ENCODE measurements at regions of chr2 and their contacts with region 1.

Region 1: GRCh38 chr2:202831242-202832220 is 40.0 kb downstream of the ICA1L start:
- DNase-seq: peak; percentile 65 to 78
- H3K4me3 ChIP-seq: no peak overlapping the region
- H3K4me3 Mint-ChIP-seq: peak overlapping the region; percentile 14
- H3K27ac Mint-ChIP-seq: no peak overlapping the region
- H3K4me1 ChIP-seq: 0 out of 2 replicates have a peak, but pooled peaks cover 6% of the 10 kb centered on the region
- H3K4me1 Mint-ChIP-seq: peaks cover 9% of the 10 kb centered on the region
- H3K27me3 ChIP-seq: no peaks in the 10 kb centered on the region
- H3K27me3 Mint-ChIP-seq: no peaks in the 10 kb centered on the region
- CTCF ChIP-seq: peak; percentile 65 to 82

Region 2: DNA sequence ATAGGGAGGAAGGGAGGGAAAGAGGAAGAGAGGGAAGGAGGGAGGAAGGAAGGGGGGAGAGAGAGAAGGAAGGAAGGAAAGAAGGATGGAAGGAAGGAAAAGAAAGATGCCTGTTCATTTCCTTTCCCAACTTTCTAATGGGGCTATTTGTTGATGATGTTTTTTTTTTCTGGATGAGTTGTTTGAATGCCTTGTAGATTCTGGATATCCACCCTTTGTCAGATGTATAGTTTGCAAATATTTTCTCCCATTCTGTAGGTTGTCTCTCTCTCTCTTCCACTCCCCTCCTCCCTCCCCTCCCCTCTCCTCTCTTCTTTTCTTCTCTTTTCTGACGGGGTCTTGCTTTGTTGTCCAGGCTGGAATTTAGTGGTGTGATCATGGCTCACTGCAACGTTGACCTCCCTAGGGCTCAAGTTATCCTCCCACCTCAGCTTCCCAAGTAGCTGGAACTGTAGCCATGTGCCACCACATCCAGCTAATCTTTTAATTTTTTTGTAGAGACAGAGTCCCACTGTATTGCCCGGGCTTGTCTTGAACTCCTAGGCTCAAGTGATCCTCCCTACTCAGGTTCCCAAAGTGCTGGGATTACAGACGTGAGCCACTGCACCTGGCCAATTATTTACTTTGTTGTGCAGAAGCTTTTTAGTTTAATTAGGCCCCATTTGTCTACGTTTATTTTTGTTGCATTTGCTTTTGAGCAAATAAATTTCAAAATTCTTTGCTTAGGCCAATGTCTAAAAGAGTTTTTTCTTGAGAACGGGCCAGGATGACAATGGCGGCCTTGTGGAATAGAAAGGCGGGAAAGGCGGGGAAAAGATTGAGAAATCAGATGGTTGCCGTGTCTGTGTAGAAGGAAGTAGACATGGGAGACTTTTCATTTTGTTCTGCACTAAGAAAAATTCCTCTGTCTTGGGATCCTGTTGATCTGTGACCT is 254.0 kb before region 1 on chr2:
- CTCF ChIA-PET with region 1: no interaction called
- POLR2A ChIA-PET with region 1: no interaction called
- intact Hi-C with region 1: loop called (anchors 2 kb)
- DNase-seq: no peak
- H3K4me3 ChIP-seq: no peak overlapping the region
- H3K4me3 Mint-ChIP-seq: no peak overlapping the region
- H3K27ac Mint-ChIP-seq: no peak overlapping the region
- H3K4me1 ChIP-seq: no peaks in the 10 kb centered on the region
- H3K4me1 Mint-ChIP-seq: no peaks in the 10 kb centered on the region
- H3K27me3 ChIP-seq: no peaks in the 10 kb centered on the region
- H3K27me3 Mint-ChIP-seq: no peaks in the 10 kb centered on the region
- CTCF ChIP-seq: no peak

Region 3: GRCh38 chr2:202634556-202635427 is 196.7 kb before region 1 on chr2 and contains the start of gene FAM117B:
- CTCF ChIA-PET with region 1: no interaction called
- POLR2A ChIA-PET with region 1: no interaction called
- intact Hi-C with region 1: no loop called
- DNase-seq: peak; percentile 98
- H3K4me3 ChIP-seq: peak within 1 kb of the TSS; percentile 97
- H3K4me3 Mint-ChIP-seq: peak within 1 kb of the TSS; percentile 89
- H3K27ac Mint-ChIP-seq: peak within 1 kb of the TSS; percentile 80
- H3K4me1 ChIP-seq: peaks cover 9% of the 10 kb centered on the region; the same call in 1 of the 2 replicates
- H3K4me1 Mint-ChIP-seq: peaks cover 15% of the 10 kb centered on the region
- H3K27me3 ChIP-seq: no peaks in the 10 kb centered on the region
- H3K27me3 Mint-ChIP-seq: no peaks in the 10 kb centered on the region
- CTCF ChIP-seq: peak in 1 of 2 experiments; percentile 34
- total RNA-seq, gene FAM117B: 9.6 and 9.8 TPM in 2 replicates

Region 4: DNA sequence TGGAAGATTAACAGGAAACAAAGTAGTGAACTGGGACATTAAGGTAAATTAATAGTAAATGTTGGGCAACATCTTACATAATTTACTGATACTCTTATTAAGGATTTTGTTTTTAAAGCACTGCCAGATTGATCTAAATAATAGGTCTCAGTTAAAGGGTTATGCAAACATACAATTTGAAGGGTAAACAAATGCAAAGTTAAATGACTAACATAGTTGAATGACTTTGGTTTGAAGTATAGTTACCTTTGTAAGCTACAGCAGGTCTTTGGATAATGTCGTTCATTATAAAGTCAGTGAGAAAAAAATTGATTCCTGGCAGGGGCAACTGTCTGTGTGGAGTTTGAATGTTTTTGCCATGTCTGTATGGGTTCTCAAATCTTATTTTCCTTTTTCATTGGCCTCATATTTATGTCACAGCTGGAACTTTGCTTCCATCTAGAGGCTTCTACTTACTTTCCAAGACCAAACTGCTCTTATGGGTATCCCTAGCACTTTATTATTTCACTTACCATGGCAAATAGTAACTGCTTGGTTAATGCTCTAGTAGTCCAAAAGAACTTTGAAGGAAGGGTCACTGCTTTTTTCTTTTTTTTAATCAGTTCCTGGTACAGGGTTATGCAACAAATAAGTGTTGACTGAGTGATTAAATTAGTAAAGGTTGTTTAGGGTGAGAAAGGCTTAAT is 290.9 kb after region 1 on chr2:
- CTCF ChIA-PET with region 1: no interaction called
- POLR2A ChIA-PET with region 1: no interaction called
- intact Hi-C with region 1: loop called (anchors 1 kb)
- DNase-seq: peak in 1 of 2 experiments; percentile 16
- H3K4me3 ChIP-seq: no peak overlapping the region
- H3K4me3 Mint-ChIP-seq: no peak overlapping the region
- H3K27ac Mint-ChIP-seq: no peak overlapping the region
- H3K4me1 ChIP-seq: 0 out of 2 replicates have a peak, but pooled peaks cover 7% of the 10 kb centered on the region
- H3K4me1 Mint-ChIP-seq: no peaks in the 10 kb centered on the region
- H3K27me3 ChIP-seq: no peaks in the 10 kb centered on the region
- H3K27me3 Mint-ChIP-seq: no peaks in the 10 kb centered on the region
- CTCF ChIP-seq: peak in 1 of 2 experiments; percentile 31

Region 5: GRCh38 chr2:203135105-203135504 is 303.6 kb after region 1 on chr2:
- CTCF ChIA-PET with region 1: no interaction called
- POLR2A ChIA-PET with region 1: no interaction called
- intact Hi-C with region 1: no loop called
- DNase-seq: no peak
- H3K4me3 ChIP-seq: no peak overlapping the region
- H3K4me3 Mint-ChIP-seq: no peak overlapping the region
- H3K27ac Mint-ChIP-seq: no peak overlapping the region
- H3K4me1 ChIP-seq: no peaks in the 10 kb centered on the region
- H3K4me1 Mint-ChIP-seq: no peaks in the 10 kb centered on the region
- H3K27me3 ChIP-seq: no peaks in the 10 kb centered on the region
- H3K27me3 Mint-ChIP-seq: no peaks in the 10 kb centered on the region
- CTCF ChIP-seq: no peak

Region 6: DNA sequence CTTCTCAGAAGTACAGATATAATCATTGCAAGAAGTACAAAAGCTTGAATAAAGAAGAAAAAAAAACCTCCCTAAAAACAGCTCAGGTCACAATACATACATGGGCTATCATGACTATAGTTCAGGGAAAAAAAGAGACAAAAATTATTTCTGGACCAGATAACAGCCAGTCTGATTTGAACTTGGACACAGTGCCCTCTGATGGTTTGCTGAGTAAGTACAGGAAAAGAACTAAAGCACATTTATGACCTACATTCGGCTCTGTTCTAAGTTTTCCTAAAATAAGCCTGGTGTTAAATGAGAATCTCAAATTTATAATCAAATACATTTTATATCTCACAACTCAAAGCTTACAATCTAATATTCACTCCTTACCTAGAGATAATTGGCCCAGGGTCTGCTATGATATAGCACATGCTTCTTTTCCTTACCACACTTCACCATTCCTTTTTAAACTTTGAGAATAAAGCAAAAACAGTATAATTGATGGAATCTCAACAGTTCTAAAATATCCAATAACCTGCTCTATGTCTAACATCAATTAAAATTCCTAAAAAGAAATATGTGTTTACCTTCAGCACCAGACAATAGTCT is 622.4 kb after region 1 on chr2:
- CTCF ChIA-PET with region 1: no interaction called
- POLR2A ChIA-PET with region 1: no interaction called
- intact Hi-C with region 1: loop called (anchors 10 kb)
- DNase-seq: peak in 1 of 2 experiments; percentile 51
- H3K4me3 ChIP-seq: no peak overlapping the region
- H3K4me3 Mint-ChIP-seq: no peak overlapping the region
- H3K27ac Mint-ChIP-seq: no peak overlapping the region
- H3K4me1 ChIP-seq: peaks cover 10% of the 10 kb centered on the region
- H3K4me1 Mint-ChIP-seq: peaks cover 13% of the 10 kb centered on the region
- H3K27me3 ChIP-seq: no peaks in the 10 kb centered on the region
- H3K27me3 Mint-ChIP-seq: no peaks in the 10 kb centered on the region
- CTCF ChIP-seq: peak; percentile 70 to 80

Measured in Caco-2 (cell line).